OCI-LY7 (cell line): ENCODE measurements at regions of chr16 and their contacts with region 1.

Region 1: GRCh38 chr16:84738255-84739038 is 38.6 kb downstream of the USP10 start:
- DNase-seq: peak; percentile 88
- H3K4me3 ChIP-seq: no peak overlapping the region
- H3K27ac ChIP-seq: no peak overlapping the region
- H3K4me1 ChIP-seq: peaks cover 22% of the 10 kb centered on the region
- CTCF ChIP-seq: peak; percentile 99

Region 2: GRCh38 chr16:84672276-84673202 is 65.9 kb before region 1 on chr16:
- CTCF ChIA-PET with region 1: interaction called, 3 read pairs
- POLR2A ChIA-PET with region 1: no interaction called
- intact Hi-C with region 1: loop called (anchors 1 kb)
- DNase-seq: peak; percentile 81
- H3K4me3 ChIP-seq: no peak overlapping the region
- H3K27ac ChIP-seq: no peak overlapping the region
- H3K4me1 ChIP-seq: peaks cover 9% of the 10 kb centered on the region
- CTCF ChIP-seq: peak; percentile 97